Activated naive CD4-positive, alpha-beta T cell treated with anti-CD3 and anti-CD28 coated beads for 36 hours (primary cell): ENCODE measurements at regions of chr2 and their contacts with region 1.

Region 1: GRCh38 chr2:97718051-97718882 is 4.9 kb downstream of the ZAP70 start:
- DNase-seq: peak; percentile 84
- H3K4me3 Mint-ChIP-seq: peak overlapping the region; percentile 85
- H3K27ac Mint-ChIP-seq: peak overlapping the region; percentile 95
- H3K4me1 Mint-ChIP-seq: peaks cover 71% of the 10 kb centered on the region
- H3K27me3 Mint-ChIP-seq: no peaks in the 10 kb centered on the region

Region 2: DNA sequence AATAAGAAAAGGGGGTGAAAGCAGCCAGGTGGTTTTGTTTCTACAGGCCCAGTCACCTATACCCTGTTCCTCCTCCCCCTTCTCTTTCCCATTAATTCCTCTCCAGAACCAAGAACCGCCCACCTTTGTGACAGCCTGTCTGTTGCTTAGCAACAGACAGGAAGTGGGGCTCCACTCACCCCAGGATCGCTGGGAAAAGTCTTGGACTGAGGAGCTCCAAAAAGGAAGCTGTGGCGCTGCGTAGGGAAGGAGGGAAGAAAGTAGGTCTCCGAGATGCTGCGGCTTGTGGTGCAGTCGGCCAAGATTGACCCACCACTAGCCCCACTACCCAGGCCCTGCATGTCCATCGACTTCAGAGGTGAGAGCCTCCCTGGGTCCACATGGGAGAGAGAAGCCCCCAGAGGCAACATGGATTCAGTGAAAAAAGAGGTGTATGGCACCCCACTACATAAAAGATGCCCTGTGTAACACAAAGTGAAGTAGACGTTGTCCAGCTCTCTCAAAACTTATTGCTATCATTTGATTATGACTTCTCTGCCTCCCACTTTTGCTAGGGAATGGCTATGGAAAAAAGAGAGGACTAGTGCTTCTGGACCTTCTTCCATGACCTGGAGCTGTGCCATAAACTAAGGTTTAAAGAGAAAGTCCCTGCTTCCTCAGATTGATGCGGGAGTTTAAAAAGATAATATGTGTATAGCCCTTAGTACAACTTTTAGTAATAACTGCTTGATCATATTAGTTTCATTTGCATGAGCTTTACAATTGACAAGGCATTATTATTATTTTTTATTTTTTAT is 1075.5 kb before region 1 on chr2 and contains the start of gene FER1L5:
- CTCF ChIA-PET with region 1: no interaction called
- intact Hi-C with region 1: no loop called
- DNase-seq: no peak
- H3K4me3 Mint-ChIP-seq: no peak within 1 kb of the TSS
- H3K27ac Mint-ChIP-seq: no peak within 1 kb of the TSS
- H3K4me1 Mint-ChIP-seq: peaks cover 3% of the 10 kb centered on the region
- H3K27me3 Mint-ChIP-seq: no peaks in the 10 kb centered on the region
- total RNA-seq, gene FER1L5: not detected

Region 3: GRCh38 chr2:97645695-97646629 is 72.3 kb before region 1 on chr2 and contains the start of gene COX5B:
- CTCF ChIA-PET with region 1: interaction called, 5 read pairs
- intact Hi-C with region 1: loop called (anchors 2 kb)
- DNase-seq: peak; percentile 99
- H3K4me3 Mint-ChIP-seq: peak within 1 kb of the TSS; percentile 94
- H3K27ac Mint-ChIP-seq: peak within 1 kb of the TSS; percentile 96
- H3K4me1 Mint-ChIP-seq: peaks cover 21% of the 10 kb centered on the region
- H3K27me3 Mint-ChIP-seq: no peaks in the 10 kb centered on the region
- total RNA-seq, gene COX5B: 245 to 267 TPM

Region 4: GRCh38 chr2:97740590-97741182 is 22.4 kb after region 1 on chr2:
- CTCF ChIA-PET with region 1: interaction called, 20 read pairs
- intact Hi-C with region 1: no loop called
- DNase-seq: peak; percentile 50
- H3K4me3 Mint-ChIP-seq: no peak overlapping the region
- H3K27ac Mint-ChIP-seq: peak overlapping the region; percentile 72
- H3K4me1 Mint-ChIP-seq: peaks cover 37% of the 10 kb centered on the region
- H3K27me3 Mint-ChIP-seq: no peaks in the 10 kb centered on the region

Region 5: DNA sequence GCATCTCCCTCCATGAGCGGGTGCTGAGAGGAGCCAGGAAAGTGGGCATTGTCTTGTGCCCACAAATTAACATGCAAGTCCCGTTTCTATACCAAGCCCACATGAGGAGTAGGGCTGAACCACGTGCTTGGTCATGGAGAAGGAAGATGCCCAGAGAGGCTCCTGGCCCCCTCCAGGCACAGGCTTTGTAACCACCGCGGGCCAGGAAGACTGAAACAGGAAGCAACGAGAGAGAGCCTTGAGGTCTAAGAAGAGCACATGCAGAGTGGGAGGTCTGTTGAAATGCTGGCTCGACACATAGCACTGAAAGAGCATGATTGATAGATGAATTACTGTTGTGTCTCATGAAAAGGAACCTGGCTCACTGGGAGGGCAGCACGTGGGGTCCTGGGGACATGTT is 405.0 kb after region 1 on chr2:
- CTCF ChIA-PET with region 1: no interaction called
- intact Hi-C with region 1: no loop called
- DNase-seq: no peak
- H3K4me3 Mint-ChIP-seq: no peak overlapping the region
- H3K27ac Mint-ChIP-seq: no peak overlapping the region
- H3K4me1 Mint-ChIP-seq: peaks cover 2% of the 10 kb centered on the region
- H3K27me3 Mint-ChIP-seq: peaks cover 6% of the 10 kb centered on the region

Region 6: GRCh38 chr2:98134172-98135005 is 416.1 kb after region 1 on chr2:
- CTCF ChIA-PET with region 1: no interaction called
- intact Hi-C with region 1: loop called (anchors 2 kb)
- DNase-seq: peak; percentile 90
- H3K4me3 Mint-ChIP-seq: peak overlapping the region; percentile 37
- H3K27ac Mint-ChIP-seq: peak overlapping the region; percentile 84
- H3K4me1 Mint-ChIP-seq: peaks cover 29% of the 10 kb centered on the region
- H3K27me3 Mint-ChIP-seq: peaks cover 3% of the 10 kb centered on the region